Panc1 (cell line): ENCODE measurements at regions of chr1 and their contacts with region 1.

Region 1: GRCh38 chr1:222843434-222844188 is 28.8 kb downstream of the DISP1 start:
- DNase-seq: no peak
- ATAC-seq: no peak
- H3K4me3 ChIP-seq: no peak overlapping the region
- H3K27ac ChIP-seq: no peak overlapping the region
- H3K4me1 ChIP-seq: no peaks in the 10 kb centered on the region
- H3K27me3 ChIP-seq: no peaks in the 10 kb centered on the region
- CTCF ChIP-seq: no peak

Region 2: GRCh38 chr1:222334026-222334680 is 509.5 kb before region 1 on chr1:
- CTCF ChIA-PET with region 1: no interaction called
- POLR2A ChIA-PET with region 1: no interaction called
- in situ Hi-C with region 1: no loop called
- intact Hi-C with region 1: no loop called
- DNase-seq: no peak
- ATAC-seq: no peak
- H3K4me3 ChIP-seq: no peak overlapping the region
- H3K27ac ChIP-seq: no peak overlapping the region
- H3K4me1 ChIP-seq: no peaks in the 10 kb centered on the region
- H3K27me3 ChIP-seq: no peaks in the 10 kb centered on the region
- CTCF ChIP-seq: no peak

Region 3: GRCh38 chr1:222783051-222783450 is 60.6 kb before region 1 on chr1:
- CTCF ChIA-PET with region 1: no interaction called
- POLR2A ChIA-PET with region 1: no interaction called
- in situ Hi-C with region 1: no loop called
- intact Hi-C with region 1: loop called (anchors 2 kb)
- DNase-seq: no peak
- ATAC-seq: no peak
- H3K4me3 ChIP-seq: no peak overlapping the region
- H3K27ac ChIP-seq: no peak overlapping the region
- H3K4me1 ChIP-seq: no peaks in the 10 kb centered on the region
- H3K27me3 ChIP-seq: no peaks in the 10 kb centered on the region
- CTCF ChIP-seq: no peak

Region 4: GRCh38 chr1:222928212-222928611 is 84.6 kb after region 1 on chr1:
- CTCF ChIA-PET with region 1: no interaction called
- POLR2A ChIA-PET with region 1: no interaction called
- in situ Hi-C with region 1: no loop called
- intact Hi-C with region 1: no loop called
- DNase-seq: no peak
- ATAC-seq: peak; percentile 71; the same call in 1 of the 2 replicates
- H3K4me3 ChIP-seq: no peak overlapping the region
- H3K27ac ChIP-seq: no peak overlapping the region
- H3K4me1 ChIP-seq: no peaks in the 10 kb centered on the region
- H3K27me3 ChIP-seq: no peaks in the 10 kb centered on the region
- CTCF ChIP-seq: no peak